ENCODE measurements at regions of chr11 and their contacts with region 1.

Region 1: DNA sequence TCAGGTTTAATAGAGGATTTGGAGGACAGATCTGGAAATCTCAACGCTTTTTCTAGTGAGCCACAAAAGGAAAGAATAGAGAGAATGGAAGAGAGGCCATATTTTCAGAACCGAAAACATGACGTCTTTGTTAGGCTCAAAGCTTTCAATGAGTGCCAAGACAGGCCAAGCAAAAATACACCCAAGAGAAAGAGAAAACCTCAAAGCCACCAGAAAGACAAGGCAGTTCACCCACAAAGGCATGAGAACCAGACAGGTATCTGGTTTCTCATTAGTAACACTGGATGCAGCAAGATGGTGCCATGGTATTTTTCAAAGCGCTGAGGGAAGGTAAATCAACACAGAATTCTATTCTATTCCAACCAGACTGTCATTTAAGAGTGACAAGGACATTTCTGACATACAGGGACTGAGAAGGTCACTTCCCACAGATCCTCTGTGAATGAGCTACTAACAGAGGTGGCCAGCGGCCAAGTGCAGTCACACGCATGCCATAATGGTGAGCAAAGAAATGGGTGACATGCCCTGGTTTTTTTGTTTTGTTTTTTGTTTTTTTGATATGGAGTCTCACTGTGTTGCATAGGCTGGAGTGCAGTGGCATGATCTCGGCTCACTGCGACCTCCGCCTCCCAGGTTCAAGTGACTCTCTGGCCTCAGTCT is 41.9 kb downstream of the TOLLIP start:
- DNase-seq: no peak
- H3K4me3 ChIP-seq: no peak overlapping the region
- H3K4me3 Mint-ChIP-seq: no peak overlapping the region
- H3K27ac ChIP-seq: no peak overlapping the region
- H3K27ac Mint-ChIP-seq: no peak overlapping the region
- H3K4me1 ChIP-seq: peaks cover 9% of the 10 kb centered on the region in 2 donors
- H3K4me1 Mint-ChIP-seq: peaks cover 7% of the 10 kb centered on the region
- H3K27me3 ChIP-seq: no peaks in the 10 kb centered on the region
- H3K27me3 Mint-ChIP-seq: peaks cover 0 to 2% (median 0%) of the 10 kb centered on the region in 3 donors
- CTCF ChIP-seq: no peak

Region 2: GRCh38 chr11:1298695-1299492 is 31.3 kb after region 1 on chr11:
- intact Hi-C with region 1: loop called in 1 of 2 experiments (anchors 5 kb)
- DNase-seq: peak; percentile 71 to 79 (median 72)
- H3K4me3 ChIP-seq: peak overlapping the region in 1 of 3 experiments; percentile 2
- H3K4me3 Mint-ChIP-seq: peak overlapping the region in 1 of 2 donors; percentile 69
- H3K27ac ChIP-seq: peak overlapping the region in 1 of 2 donors; percentile 55
- H3K27ac Mint-ChIP-seq: peak overlapping the region; percentile 40 to 84 (median 79)
- H3K4me1 ChIP-seq: peaks cover 20 to 48% of the 10 kb centered on the region in 2 donors
- H3K4me1 Mint-ChIP-seq: peaks cover 54% of the 10 kb centered on the region
- H3K27me3 ChIP-seq: no peaks in the 10 kb centered on the region
- H3K27me3 Mint-ChIP-seq: no peaks in the 10 kb centered on the region
- CTCF ChIP-seq: no peak